Psoas muscle (tissue), 8 donors: ENCODE measurements at regions of chr4 and their contacts with region 1.

Region 1: DNA sequence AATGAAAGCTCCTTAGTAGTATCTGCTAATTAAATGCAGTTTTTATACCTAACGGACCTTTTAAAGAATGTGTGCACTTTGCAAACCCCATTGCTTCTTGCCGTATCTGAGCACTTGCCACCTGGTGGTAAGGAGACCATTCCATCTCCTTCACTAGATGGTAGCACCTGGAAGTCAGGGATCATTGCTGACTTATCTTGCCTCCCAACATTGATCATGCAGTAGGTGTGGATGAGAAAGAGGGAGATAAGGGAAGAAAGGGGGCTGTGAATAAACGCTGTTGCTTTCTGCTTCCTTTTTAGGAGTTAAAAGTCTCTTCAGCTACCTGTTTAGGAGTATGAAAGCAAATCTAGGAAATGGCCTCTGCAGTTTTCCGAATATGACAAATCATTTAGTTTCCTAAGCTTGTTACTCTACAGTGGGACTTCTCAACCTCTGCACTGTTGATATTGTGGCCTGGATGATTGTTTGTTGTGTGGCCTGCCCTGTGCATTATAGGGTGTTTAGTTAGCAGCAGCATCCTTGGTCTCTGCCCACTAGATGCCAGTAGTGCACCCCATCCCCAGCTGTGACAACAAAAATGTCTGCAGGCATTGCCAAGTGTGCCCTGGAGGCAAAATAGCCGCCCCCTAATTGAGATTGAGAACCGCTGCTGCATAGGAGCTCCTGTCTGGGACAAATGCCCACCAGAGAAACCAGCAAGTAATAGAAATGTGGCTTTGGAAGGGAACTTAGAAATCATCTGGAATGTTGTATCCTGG is 38.8 kb downstream of the GAB1 start:
- DNase-seq: peak in 1 of 2 donors; percentile 63
- ATAC-seq: peak; percentile 46 to 83 (median 82)
- H3K4me3 ChIP-seq: no peak overlapping the region
- H3K27ac ChIP-seq: peak overlapping the region; percentile 85
- H3K4me1 ChIP-seq: peaks cover 79% of the 10 kb centered on the region
- H3K27me3 ChIP-seq: no peaks in the 10 kb centered on the region
- CTCF ChIP-seq: peak; percentile 35

Region 2: DNA sequence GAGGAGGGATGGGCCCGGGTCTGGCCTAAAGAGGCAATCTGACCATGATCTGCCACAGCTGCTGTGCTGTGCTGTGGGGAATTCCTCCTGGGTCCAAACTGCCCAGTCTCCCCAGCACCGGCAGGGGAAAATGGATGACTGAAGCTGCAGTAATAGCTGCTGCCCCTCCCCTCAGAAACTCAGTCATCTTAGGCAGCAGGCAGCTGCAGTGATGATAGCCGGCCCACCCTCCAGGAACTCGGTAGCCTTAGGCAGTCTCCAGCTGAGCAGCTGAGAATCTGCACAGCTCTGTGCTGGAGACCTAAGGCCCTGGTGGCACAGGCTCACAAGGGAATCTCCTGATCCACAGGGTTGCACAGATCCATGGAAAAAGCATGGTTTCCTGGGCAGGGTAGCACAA is 304.1 kb before region 1 on chr4:
- intact Hi-C with region 1: no loop called
- DNase-seq: no peak
- ATAC-seq: no peak
- H3K4me3 ChIP-seq: no peak overlapping the region
- H3K27ac ChIP-seq: no peak overlapping the region
- H3K4me1 ChIP-seq: no peaks in the 10 kb centered on the region
- H3K27me3 ChIP-seq: no peaks in the 10 kb centered on the region
- CTCF ChIP-seq: no peak

Region 3: DNA sequence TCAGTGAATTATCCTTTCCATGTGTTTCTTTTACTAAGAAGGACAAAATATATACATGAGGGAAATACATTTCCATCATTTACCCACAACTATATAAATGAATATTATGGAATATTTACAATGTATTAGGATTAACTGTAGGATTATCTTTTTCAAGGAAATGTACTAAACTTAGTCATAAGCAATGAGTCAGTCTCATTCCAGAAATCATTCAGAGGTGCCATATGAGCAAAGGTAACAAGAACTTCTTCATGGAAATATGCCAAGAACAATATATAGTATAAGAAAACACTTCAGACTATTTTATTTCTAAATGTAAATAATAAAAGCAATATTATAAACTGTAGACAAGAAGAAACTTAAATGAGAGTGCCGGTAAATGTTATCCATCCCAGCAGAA is 123.7 kb before region 1 on chr4:
- intact Hi-C with region 1: no loop called
- DNase-seq: no peak
- ATAC-seq: no peak
- H3K4me3 ChIP-seq: no peak overlapping the region
- H3K27ac ChIP-seq: no peak overlapping the region
- H3K4me1 ChIP-seq: no peaks in the 10 kb centered on the region
- H3K27me3 ChIP-seq: no peaks in the 10 kb centered on the region
- CTCF ChIP-seq: no peak

Region 4: DNA sequence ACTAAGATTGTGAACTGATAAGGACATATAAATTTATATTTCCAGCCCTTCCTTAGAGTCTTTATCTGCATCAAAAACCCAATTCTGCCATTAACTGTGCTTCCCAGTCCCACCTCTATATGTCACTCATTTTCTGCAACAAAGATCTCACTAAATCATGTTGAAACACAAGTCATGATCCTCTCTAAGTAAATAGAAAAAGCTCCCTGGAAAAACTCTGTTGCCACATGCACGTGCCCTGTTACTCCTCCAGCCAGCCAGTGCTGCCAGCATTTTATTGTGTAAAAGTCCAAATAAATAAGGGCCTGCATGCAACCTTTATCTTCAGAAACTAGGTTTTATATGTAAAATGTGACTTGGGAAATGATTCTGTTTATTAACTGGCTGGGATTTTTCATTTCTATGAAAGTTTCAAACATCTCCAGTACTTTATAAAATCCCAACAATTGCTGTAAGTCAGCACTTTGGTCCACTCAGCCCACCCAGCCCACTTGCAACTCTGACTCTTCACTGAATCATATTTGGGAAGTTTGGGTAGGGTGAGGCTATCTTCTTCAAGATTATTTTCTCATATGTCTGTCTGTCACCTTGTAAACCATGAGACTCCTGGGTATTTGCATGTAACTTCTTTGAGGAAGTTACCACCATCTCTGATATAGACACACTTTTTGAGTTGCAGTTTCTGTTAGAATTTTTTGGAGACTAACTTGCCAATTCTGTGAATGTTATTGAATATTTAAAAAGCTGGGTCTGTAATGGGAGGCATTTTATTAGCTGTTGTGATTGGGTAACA is 98.0 kb after region 1 on chr4:
- intact Hi-C with region 1: loop called in 1 of 2 experiments (anchors 10 kb)
- DNase-seq: no peak
- ATAC-seq: no peak
- H3K4me3 ChIP-seq: no peak overlapping the region
- H3K27ac ChIP-seq: no peak overlapping the region
- H3K4me1 ChIP-seq: no peaks in the 10 kb centered on the region
- H3K27me3 ChIP-seq: no peaks in the 10 kb centered on the region
- CTCF ChIP-seq: no peak